SK-N-SH (cell line): ENCODE measurements at regions of chr9 and their contacts with region 1.

Region 1: GRCh38 chr9:132447346-132447745 is 37.3 kb downstream of the CFAP77 start:
- DNase-seq: peak; percentile 55
- H3K4me3 ChIP-seq: no peak overlapping the region
- H3K27ac ChIP-seq: no peak overlapping the region
- H3K4me1 ChIP-seq: peaks cover 0 to 8% of the 10 kb centered on the region in 2 experiments; a peak in 1 of 4 replicates
- H3K27me3 ChIP-seq: no peaks in the 10 kb centered on the region
- CTCF ChIP-seq: peak; percentile 15; the same call in 1 of the 2 replicates
- EP300 ChIP-seq: no peak
- RAD21 ChIP-seq: no peak

Region 2: GRCh38 chr9:132457504-132458236 is 10.3 kb after region 1 on chr9:
- CTCF ChIA-PET with region 1: interaction called, 12 read pairs
- POLR2A ChIA-PET with region 1: no interaction called
- DNase-seq: no peak
- H3K4me3 ChIP-seq: no peak overlapping the region
- H3K27ac ChIP-seq: no peak overlapping the region
- H3K4me1 ChIP-seq: no peaks in the 10 kb centered on the region
- H3K27me3 ChIP-seq: no peaks in the 10 kb centered on the region
- CTCF ChIP-seq: no peak
- EP300 ChIP-seq: no peak
- RAD21 ChIP-seq: no peak